ENCODE measurements at regions of chr2 and their contacts with region 1.

Region 1: DNA sequence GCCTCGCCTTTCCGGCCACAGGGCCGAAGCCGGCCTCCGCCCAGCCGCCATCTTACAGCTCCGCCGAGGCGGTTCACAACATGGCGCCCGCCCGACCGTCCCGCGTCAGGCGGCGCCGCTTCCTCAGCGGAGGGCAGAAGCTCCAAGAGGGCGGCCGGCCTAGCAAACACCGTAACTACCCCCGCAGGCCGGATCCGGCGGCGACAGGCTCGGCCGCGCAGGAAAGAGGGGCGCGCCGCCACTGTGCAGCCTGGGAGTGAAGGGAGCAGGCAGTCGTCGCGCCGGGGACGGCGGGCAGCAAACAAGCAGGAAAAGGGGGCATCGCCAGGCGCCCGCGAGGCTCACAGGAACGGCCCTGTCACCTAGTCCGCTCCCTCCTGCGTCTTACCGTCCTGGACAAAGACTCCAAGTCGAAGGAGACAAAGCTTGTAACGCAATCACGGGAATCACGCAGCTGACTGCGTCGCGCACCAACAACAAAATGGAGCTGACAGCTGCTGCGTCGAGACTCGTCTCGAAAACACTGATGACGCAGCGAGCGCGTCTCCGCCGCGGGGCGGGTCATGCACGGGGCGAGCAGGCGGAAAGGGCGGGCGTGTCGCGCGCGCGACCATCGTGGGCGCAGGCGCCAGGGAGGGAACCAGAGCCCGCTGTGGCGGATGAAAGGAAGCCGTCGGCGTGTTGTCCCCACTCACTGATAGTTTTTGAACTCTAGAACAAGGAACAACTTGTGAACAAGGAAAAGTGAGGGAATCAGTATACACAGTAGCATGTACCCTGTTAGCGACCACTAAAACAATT is at the start of gene CLK1:
- DNase-seq: peak; percentile 91
- H3K4me3 Mint-ChIP-seq: peak within 1 kb of the TSS; percentile 86
- H3K27ac Mint-ChIP-seq: peak within 1 kb of the TSS; percentile 99
- H3K4me1 Mint-ChIP-seq: peaks cover 16% of the 10 kb centered on the region
- H3K27me3 Mint-ChIP-seq: no peaks in the 10 kb centered on the region
- CTCF ChIP-seq: no peak
- total RNA-seq, gene CLK1: 102 and 118 TPM in 2 replicates

Region 2: GRCh38 chr2:200756618-200757321 is 107.6 kb before region 1 on chr2:
- CTCF ChIA-PET with region 1: no interaction called
- POLR2A ChIA-PET with region 1: interaction called, 13 read pairs
- intact Hi-C with region 1: no loop called
- DNase-seq: peak; percentile 89
- H3K4me3 Mint-ChIP-seq: no peak overlapping the region
- H3K27ac Mint-ChIP-seq: peak overlapping the region; percentile 74
- H3K4me1 Mint-ChIP-seq: peaks cover 25% of the 10 kb centered on the region
- H3K27me3 Mint-ChIP-seq: no peaks in the 10 kb centered on the region
- CTCF ChIP-seq: no peak

Region 3: GRCh38 chr2:200765139-200765951 is 99.0 kb before region 1 on chr2:
- CTCF ChIA-PET with region 1: interaction called, 4 read pairs
- POLR2A ChIA-PET with region 1: interaction called, 31 read pairs
- intact Hi-C with region 1: loop called (anchors 2 kb)
- DNase-seq: peak; percentile 96
- H3K4me3 Mint-ChIP-seq: peak overlapping the region; percentile 11
- H3K27ac Mint-ChIP-seq: peak overlapping the region; percentile 79
- H3K4me1 Mint-ChIP-seq: peaks cover 49% of the 10 kb centered on the region
- H3K27me3 Mint-ChIP-seq: no peaks in the 10 kb centered on the region
- CTCF ChIP-seq: no peak

Region 4: DNA sequence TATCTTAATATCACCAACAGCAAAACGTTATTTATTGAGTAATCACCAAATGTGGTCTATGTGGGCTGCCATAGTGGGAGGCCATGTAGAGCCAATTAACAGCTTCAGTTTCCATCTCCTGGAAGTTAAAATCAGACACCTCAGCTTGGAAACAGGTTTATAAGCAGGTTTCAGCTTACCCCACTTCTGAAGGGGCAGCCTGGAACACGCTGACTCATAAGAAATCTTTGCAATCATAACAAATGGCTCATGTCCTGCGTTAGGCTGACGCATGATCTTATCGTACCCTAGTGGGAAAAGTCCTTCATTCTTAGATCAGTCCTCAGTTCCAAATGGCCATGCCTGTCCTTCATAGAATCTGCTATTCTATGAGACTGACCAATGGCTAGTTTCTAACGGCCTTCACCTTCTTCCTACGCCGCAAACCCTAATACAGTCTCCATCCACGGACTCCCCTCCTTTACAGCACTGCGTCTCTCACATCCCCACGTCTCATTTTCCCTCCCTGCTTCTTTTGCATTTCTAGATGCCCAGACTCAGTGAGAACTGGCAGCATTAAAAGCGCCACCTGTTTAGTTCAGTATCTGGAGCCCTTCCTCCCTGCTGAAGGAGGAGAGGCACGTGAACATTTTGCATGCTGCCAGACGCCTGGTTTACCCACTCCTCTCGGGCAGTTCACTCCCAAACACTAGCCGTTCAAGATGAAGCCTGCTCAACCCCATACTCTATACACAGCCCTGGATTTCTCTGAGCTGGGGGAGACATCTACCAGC is 76.8 kb before region 1 on chr2:
- CTCF ChIA-PET with region 1: interaction called, 4 read pairs
- POLR2A ChIA-PET with region 1: interaction called, 10 read pairs
- intact Hi-C with region 1: no loop called
- DNase-seq: peak; percentile 93
- H3K4me3 Mint-ChIP-seq: peak overlapping the region; percentile 10
- H3K27ac Mint-ChIP-seq: peak overlapping the region; percentile 89
- H3K4me1 Mint-ChIP-seq: peaks cover 19% of the 10 kb centered on the region
- H3K27me3 Mint-ChIP-seq: no peaks in the 10 kb centered on the region
- CTCF ChIP-seq: no peak

Region 5: DNA sequence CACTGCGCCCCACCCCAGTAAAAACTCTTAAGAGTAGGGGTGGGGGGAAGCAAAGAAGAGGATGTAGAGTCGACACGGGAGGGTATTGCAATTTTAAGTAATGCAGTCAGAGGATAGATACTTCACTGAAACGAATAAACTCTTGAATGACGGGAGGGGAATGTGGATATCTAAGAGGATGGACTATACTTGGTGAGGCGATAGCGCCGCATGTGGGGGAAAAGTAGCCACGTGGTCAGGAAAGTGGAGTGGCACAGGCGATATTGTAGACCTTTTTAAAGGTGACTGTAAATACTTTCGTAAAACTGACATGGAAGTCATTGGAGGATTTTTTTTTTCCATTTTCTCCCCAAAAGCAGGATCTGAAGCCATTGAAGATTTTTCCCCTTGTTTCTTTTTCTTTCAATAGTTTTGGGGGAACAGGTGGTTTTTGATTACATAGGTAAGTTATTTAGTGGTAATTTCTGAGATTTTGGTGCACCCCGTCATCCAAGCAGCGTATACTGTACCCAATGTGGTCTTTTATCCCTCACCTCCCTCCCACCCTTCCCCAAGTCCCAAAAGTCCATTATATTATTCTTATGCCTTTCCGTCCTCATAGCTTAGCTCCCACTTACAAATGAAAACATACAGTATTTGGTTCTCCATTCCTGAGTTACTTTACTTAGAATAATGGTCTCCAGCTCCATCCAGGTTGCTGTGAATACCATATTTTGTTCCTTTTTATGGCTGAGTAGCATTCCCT is 13.7 kb before region 1 on chr2:
- CTCF ChIA-PET with region 1: interaction called, 3 read pairs
- POLR2A ChIA-PET with region 1: interaction called, 14 read pairs
- intact Hi-C with region 1: no loop called
- DNase-seq: no peak
- H3K4me3 Mint-ChIP-seq: no peak overlapping the region
- H3K27ac Mint-ChIP-seq: no peak overlapping the region
- H3K4me1 Mint-ChIP-seq: no peaks in the 10 kb centered on the region
- H3K27me3 Mint-ChIP-seq: no peaks in the 10 kb centered on the region
- CTCF ChIP-seq: no peak

Region 6: DNA sequence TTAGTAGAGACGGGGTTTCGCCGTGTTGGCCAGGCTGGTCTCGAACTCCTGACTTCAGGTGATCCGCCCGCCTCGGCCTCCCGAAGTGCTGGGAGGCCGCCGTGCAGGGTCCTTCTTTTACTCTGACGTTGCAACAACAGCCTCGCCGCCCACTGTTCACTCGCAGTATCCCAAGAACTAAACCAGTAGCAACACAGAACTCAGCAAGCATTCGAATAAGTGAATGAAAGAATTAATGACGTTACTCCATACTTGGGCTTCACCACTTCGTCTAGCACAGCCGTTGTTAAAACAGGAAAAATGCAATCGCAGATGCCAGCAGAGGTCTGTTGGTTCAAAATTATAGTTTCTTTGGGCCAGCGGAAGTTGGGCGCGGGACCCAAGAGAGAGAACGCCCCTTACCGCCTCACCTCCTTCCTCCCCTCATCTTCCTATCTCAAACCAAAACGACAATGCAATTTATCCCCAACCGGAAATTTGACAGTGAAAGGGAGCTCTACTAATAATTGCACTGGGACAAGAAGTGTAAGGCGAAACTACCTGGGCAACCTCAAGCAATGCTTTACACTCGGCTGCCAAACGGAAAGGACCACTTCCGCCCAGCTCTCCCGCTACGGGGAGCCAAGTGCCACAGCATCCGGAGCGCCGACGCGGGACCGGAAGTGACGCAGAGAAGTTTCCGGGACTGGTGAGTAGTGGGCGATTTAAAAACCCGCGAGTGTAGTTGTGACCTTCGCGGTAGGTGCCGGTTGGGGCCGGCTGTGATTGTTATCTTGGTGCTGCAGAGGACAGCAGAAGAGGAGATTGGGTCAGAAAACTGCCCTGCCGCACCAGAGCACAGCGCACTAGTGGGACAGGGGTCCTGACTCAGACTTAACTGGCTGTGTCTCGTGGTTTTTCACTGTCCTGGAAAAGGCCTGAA is 24.6 kb after region 1 on chr2 and contains the starts of genes NIF3L1 and PPIL3:
- CTCF ChIA-PET with region 1: interaction called, 3 read pairs
- POLR2A ChIA-PET with region 1: interaction called, 78 read pairs
- intact Hi-C with region 1: no loop called
- DNase-seq: peak; percentile 98
- H3K4me3 Mint-ChIP-seq: peak within 1 kb of the TSS; percentile 98
- H3K27ac Mint-ChIP-seq: peak within 1 kb of the TSS; percentile 98
- H3K4me1 Mint-ChIP-seq: peaks cover 21% of the 10 kb centered on the region
- H3K27me3 Mint-ChIP-seq: no peaks in the 10 kb centered on the region
- CTCF ChIP-seq: no peak
- total RNA-seq, gene NIF3L1: 19.3 and 26.1 TPM in 2 replicates
- total RNA-seq, gene PPIL3: 33.9 and 35.4 TPM in 2 replicates

Region 7: GRCh38 chr2:200963124-200963917 is 98.9 kb after region 1 on chr2 and contains the start of gene ORC2:
- CTCF ChIA-PET with region 1: interaction called, 3 read pairs
- POLR2A ChIA-PET with region 1: interaction called, 15 read pairs
- intact Hi-C with region 1: no loop called
- DNase-seq: peak; percentile 96
- H3K4me3 Mint-ChIP-seq: peak within 1 kb of the TSS; percentile 86
- H3K27ac Mint-ChIP-seq: peak within 1 kb of the TSS; percentile 76
- H3K4me1 Mint-ChIP-seq: peaks cover 52% of the 10 kb centered on the region
- H3K27me3 Mint-ChIP-seq: no peaks in the 10 kb centered on the region
- CTCF ChIP-seq: peak; percentile 61
- total RNA-seq, gene ORC2: 51.5 and 54.4 TPM in 2 replicates

Region 8: GRCh38 chr2:201040867-201041628 is 176.7 kb after region 1 on chr2:
- CTCF ChIA-PET with region 1: no interaction called
- POLR2A ChIA-PET with region 1: no interaction called
- intact Hi-C with region 1: no loop called
- DNase-seq: no peak
- H3K4me3 Mint-ChIP-seq: no peak overlapping the region
- H3K27ac Mint-ChIP-seq: no peak overlapping the region
- H3K4me1 Mint-ChIP-seq: no peaks in the 10 kb centered on the region
- H3K27me3 Mint-ChIP-seq: no peaks in the 10 kb centered on the region
- CTCF ChIP-seq: no peak

Measured in MCF 10A (cell line).